Right ventricle myocardium inferior (tissue), 1 donor: ENCODE measurements at regions of chr12 and their contacts with region 1.

Region 1: DNA sequence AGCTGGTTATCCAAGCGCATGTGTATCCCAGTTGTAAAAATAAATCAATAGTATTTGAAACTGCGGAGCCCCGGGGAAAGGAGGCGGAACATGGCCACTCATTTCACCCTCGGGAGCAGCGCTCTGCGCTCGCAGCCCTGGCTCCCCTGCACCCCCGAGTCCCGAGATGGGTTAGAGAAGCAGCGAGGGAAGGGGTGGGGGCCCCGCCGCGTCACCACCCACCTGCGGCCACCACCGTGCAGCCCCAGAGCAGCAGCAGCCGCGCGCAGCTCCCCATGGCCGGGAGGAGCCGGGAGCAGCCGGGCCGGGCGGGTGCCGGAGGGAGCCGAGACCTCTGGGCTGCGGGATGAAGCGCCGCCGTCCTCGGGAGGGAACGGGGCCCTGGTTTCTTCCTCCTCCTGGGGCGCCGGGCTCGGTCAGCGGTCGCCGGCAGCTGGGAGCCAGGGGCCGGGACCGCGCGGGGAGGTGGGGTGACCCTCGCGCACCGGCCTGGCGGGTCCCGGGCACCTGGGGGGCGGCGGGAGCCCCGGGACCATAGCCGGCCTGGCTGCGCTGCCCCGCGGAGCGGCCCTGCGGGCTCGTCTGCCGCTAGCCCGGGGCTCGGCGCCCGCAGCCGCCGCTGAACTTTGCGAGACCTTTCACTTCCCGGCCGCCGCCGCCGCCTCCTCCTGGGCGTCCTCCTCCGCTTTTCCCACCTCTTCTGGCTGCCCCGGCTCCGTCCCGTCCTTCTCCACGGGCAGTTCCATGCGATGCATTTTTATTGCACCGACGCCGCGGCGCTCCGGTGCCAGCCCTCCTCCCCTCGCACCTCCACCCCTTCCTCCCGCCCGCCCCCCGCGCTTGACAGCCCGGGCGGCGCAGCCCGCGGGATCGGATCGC is at the start of gene NTN4:
- DNase-seq: peak; percentile 86
- ATAC-seq: peak; percentile 65
- total RNA-seq, gene NTN4: 74.5 TPM

Region 2: DNA sequence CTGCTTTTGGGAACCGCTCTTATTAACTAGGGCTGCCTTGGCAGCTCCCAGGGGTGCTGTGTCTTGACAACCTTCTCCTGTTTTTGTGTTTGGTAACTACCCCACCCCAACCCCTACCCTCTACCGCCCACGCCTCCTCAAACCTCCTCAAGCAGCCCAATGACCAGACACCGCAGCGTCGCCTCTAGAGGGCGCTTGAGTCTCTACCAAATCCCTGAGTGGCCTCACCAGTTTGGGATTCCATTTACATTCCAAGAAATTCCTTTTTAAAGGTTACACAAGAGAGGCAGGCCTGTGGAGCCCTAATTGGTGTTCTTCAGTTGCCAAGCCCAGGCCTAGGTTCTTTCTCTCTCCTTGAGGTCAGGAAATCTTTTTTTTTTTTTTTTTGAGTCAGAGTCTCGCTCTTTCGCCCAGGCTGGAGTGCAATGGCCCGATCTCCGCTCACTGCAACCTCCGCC is 166.7 kb before region 1 on chr12:
- intact Hi-C with region 1: loop called (anchors 1 kb)
- DNase-seq: peak; percentile 76
- ATAC-seq: peak; percentile 78

Region 3: DNA sequence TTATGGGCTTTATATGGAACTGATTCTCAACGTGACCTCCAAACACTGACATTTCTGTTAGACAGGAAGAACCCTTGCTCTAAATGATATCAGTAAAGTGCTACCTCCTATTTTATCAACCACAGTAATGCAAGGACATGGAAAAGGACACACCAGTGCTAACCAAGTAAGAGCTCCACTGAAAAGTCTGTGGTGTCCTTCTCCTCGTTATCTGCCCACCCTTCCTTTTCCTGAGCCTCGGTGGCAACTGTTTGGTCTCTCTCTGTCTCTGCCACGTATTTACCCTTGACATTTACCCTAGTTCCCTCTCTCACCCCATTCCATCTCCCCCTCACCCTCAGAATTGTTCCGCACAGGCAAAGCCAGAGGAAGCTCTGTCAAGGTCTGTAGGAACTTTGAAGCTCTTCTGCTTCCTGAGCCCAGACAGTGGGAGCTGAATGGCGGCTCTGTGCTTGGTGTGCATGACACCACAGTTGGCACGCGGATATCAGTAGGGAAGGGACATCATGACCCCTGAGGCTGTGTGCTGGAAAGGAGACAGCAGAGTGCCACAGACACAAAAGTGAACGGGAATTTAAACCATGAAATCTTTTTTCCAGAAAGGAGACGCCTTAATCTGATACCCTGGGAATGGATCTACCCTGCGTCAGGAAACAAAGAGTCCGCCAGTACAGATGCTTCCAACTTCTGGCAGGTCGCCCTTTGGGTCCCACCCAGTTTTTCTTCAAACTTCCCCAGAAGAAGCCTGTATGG is 50.5 kb before region 1 on chr12:
- intact Hi-C with region 1: loop called (anchors 5 kb)
- DNase-seq: peak; percentile 82
- ATAC-seq: peak; percentile 89

Region 4: GRCh38 chr12:96985480-96986362 is 1195.4 kb after region 1 on chr12:
- intact Hi-C with region 1: no loop called
- DNase-seq: peak; percentile 70
- ATAC-seq: no peak